WTC11 (cell line): ENCODE measurements at regions of chr4 and their contacts with region 1.

Region 1: DNA sequence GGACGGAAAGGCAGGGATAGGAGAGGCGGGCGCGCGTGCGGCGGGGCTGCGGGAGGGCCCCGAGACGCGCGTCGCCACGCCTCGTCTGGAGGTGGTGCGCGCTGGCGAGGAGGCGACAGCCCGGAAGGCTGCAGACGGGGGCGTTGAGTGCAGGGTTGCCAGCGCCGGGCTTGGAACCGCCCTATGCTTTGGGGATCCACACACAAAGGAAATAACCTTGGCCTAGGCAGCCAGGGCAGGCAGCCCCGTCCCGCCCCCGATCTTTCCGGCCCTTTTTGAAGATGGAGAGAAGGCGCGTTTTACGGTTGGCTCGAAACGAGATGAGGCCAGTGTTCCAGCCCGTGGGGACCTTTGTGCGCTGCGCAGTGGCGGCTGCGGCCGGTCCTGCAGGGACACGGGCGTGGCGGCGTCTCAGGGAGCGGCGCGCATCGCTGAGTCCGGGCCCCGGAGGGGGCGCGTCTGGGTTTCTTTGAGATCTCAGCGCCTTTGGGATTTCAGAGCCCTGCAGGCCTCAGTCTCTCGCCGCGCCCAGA is 50.8 kb upstream of the TRIM2 start:
- DNase-seq: peak; percentile 68
- ATAC-seq: peak; percentile 80
- H3K4me3 Mint-ChIP-seq: peak overlapping the region; percentile 78
- H3K27ac Mint-ChIP-seq: no peak overlapping the region
- H3K4me1 Mint-ChIP-seq: peaks cover 56% of the 10 kb centered on the region
- H3K27me3 Mint-ChIP-seq: peaks cover 71% of the 10 kb centered on the region
- CTCF ChIP-seq: no peak

Region 2: GRCh38 chr4:152983774-152984411 is 169.5 kb before region 1 on chr4:
- CTCF ChIA-PET with region 1: no interaction called
- POLR2A ChIA-PET with region 1: no interaction called
- DNase-seq: no peak
- ATAC-seq: no peak
- H3K4me3 Mint-ChIP-seq: no peak overlapping the region
- H3K27ac Mint-ChIP-seq: no peak overlapping the region
- H3K4me1 Mint-ChIP-seq: peaks cover 18% of the 10 kb centered on the region
- H3K27me3 Mint-ChIP-seq: no peaks in the 10 kb centered on the region
- CTCF ChIP-seq: no peak

Region 3: DNA sequence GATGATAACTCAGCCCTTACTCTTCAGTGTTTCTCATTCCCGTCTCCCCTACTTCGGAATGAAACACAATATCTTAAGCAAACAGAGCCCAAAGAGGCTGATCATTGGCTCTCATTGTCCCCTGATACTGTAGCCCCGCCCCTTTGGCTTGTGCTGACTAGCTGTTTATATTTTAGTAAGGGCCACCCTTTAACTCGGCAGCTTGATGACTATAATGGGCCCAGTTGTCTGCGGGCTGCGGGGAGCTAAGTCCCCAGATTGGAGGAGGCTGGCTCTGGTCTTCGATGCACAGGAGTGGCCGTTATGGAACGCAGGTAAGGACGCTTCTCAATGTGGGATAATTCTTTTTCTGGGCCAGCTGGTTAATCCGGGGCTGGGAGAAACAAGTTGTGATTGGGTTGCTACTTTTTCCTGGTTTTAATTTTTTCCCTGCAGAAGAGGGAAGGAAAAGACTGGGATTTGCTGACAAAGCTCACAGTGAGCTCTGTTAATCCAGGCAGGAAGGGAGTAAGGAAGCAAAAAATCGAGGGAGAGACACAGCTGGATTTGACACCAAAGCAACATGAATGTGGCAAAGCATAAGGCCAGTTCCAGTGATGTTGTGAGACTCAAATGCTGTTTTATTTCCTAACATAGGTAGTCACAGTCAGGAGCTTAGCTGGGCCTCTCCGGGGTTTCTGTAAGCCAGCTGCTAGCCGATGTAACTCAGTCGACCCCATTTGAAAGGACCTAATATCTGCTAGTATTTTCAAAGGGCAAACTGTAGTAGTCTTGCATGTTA is 51.0 kb after region 1 on chr4 and contains the start of gene TRIM2:
- CTCF ChIA-PET with region 1: interaction called, 10 read pairs
- POLR2A ChIA-PET with region 1: no interaction called
- DNase-seq: peak; percentile 74
- ATAC-seq: peak; percentile 65
- H3K4me3 Mint-ChIP-seq: peak within 1 kb of the TSS; percentile 79
- H3K27ac Mint-ChIP-seq: peak within 1 kb of the TSS; percentile 92
- H3K4me1 Mint-ChIP-seq: peaks cover 54% of the 10 kb centered on the region
- H3K27me3 Mint-ChIP-seq: no peaks in the 10 kb centered on the region
- CTCF ChIP-seq: no peak
- total RNA-seq, gene TRIM2: 42.0 to 54.5 TPM (median 43.9 TPM) in 3 replicates